ENCODE measurements at regions of chr4 and their contacts with region 1.

Region 1: DNA sequence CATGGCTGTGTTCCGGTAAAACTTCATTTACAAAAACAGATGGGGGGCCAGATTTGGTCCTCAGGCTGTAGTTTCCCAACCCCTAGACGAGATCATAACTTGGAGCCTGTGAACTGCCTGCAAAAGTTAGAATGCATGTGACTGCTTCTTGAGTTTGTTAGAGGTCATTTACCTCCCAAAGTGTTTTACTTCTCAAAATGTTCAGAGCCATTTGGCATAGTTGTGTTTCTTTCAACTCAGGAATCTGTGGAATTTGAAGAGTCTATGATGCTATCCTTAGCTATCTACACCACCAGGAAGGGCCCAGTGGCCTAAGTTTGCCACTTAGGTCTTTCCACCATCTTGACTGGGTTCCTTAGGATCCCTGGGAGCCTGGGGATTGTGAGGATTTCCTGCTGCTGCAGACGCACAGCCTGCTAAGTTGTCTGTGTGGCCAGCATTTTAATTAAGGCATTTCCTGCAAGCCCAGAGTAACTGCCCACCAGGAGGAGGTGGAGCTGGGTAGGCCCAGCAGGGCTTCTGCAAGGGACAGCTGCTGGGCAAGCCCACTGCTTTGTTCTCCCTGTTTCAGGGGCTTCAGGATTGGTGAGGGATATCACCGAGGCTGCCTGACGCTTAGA is 53.1 kb downstream of the CCNI start:
- DNase-seq: no peak
- H3K4me3 ChIP-seq: no peak overlapping the region
- H3K27ac ChIP-seq: peak overlapping the region; percentile 22 to 25
- H3K4me1 ChIP-seq: no peaks in the 10 kb centered on the region
- H3K27me3 ChIP-seq: no peaks in the 10 kb centered on the region
- CTCF ChIP-seq: no peak
- POLR2A ChIP-seq: no peak

Region 2: GRCh38 chr4:77430847-77431246 is 408.2 kb after region 1 on chr4:
- intact Hi-C with region 1: no loop called
- DNase-seq: no peak
- H3K4me3 ChIP-seq: no peak overlapping the region
- H3K27ac ChIP-seq: no peak overlapping the region
- H3K4me1 ChIP-seq: no peaks in the 10 kb centered on the region
- H3K27me3 ChIP-seq: no peaks in the 10 kb centered on the region
- CTCF ChIP-seq: no peak
- POLR2A ChIP-seq: no peak

Region 3: DNA sequence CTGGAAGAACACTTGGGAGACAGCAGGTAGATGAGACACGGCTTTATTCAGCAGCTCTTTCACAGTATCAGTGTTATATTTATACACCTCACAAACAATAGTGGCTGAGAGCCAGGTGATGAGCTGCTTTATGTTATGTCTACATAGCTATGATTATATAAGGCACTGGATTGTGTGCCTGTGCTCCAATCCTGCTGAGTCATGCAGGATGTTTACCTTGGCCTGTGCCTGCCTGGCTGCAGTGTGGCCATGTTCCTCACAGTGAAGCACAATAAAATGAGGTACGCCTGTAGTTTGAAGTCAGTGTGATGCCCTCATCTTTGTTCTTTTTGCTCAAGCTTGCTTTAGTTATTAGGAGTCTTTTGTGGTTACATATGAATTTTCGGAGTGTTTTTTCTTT is 614.2 kb after region 1 on chr4:
- intact Hi-C with region 1: loop called (anchors 5 kb)
- DNase-seq: no peak
- H3K4me3 ChIP-seq: no peak overlapping the region
- H3K27ac ChIP-seq: no peak overlapping the region
- H3K4me1 ChIP-seq: no peaks in the 10 kb centered on the region
- H3K27me3 ChIP-seq: no peaks in the 10 kb centered on the region
- CTCF ChIP-seq: no peak
- POLR2A ChIP-seq: no peak

Measured in breast epithelium (tissue), 4 donors.